ENCODE measurements at regions of chr1 and their contacts with region 1.

Region 1: DNA sequence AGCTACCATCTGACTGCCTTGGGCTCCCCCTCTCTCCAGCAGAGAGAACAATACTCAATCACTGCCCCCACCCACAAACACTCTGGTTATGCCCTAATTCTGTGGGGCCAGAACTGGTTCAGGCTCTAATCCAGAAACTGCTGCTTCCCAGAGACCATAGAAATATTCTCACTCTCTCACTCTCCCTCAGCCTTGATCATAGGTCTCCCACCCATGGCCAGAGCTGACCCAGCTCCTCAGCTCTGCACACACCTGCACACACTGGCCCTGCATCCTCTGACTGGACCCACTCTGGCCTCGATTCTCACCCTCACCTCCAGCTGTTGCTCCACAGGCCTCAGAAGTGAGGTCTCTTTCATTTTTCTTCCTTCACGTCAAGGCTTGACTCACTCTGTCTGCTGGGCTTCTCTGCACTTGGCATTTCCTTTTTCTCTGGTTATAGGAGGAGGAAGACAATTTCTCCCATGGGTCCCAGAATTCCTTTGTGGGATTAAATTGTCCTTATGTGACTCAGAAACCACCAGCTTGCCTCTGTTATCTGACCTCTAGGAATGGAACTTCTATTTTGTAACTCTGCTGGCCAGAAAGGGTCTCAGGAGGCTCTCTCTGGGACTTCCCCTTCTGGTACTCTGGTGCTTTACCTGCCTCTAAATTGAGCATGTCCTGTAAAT is 15.6 kb upstream of the ZMYM6 start:
- DNase-seq: peak; percentile 64
- ATAC-seq: peak; percentile 46
- H3K4me3 ChIP-seq: no peak overlapping the region
- H3K27ac ChIP-seq: no peak overlapping the region; the same call in 1 of the 2 replicates
- H3K4me1 ChIP-seq: peaks cover 8% of the 10 kb centered on the region; the same call in 1 of the 2 replicates
- H3K27me3 ChIP-seq: no peaks in the 10 kb centered on the region
- CTCF ChIP-seq: no peak

Region 2: DNA sequence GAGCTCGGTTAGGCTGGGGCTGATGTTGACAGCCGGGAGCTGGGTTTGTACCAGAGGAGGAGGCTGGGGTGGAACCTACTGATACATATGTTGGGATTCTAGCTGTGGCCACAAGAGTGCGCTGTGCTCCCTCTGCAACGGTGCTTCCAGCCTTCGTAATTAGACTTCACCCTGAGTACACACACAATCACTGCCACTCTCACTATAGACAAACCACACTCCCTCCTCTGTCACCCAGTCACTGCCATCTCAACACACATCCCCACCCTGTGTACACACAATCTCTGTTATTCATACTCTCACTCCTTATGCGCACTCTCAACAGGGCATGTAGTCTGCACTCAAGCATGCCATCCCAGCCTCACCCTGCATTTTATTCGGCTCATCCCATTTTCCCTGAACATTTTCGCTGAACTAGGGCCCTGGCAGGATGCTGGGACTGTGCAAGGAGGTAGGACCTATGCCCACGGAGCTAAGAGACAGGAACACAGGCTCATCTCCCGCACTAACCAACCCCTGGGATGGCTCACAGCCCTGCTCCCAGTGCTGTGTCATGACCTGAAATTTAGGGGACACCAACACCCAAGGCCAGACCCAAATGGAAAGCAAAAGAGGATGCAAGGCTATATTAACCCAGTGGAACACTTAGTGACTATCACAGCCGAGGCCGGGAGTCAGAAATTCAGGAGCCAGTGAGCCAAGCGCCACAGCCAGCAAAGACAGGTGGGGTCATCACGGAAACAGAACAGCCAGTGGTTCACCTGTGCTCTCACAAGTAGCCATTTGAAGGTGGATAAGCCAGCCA is 260.6 kb before region 1 on chr1:
- CTCF ChIA-PET with region 1: no interaction called
- POLR2A ChIA-PET with region 1: no interaction called
- intact Hi-C with region 1: no loop called
- DNase-seq: peak; percentile 87
- ATAC-seq: peak; percentile 76
- H3K4me3 ChIP-seq: no peak overlapping the region
- H3K27ac ChIP-seq: peak overlapping the region; percentile 80
- H3K4me1 ChIP-seq: peaks cover 53% of the 10 kb centered on the region
- H3K27me3 ChIP-seq: no peaks in the 10 kb centered on the region
- CTCF ChIP-seq: peak; percentile 85

Region 3: GRCh38 chr1:34911465-34911864 is 135.9 kb before region 1 on chr1:
- CTCF ChIA-PET with region 1: no interaction called
- POLR2A ChIA-PET with region 1: interaction called, 13 read pairs
- intact Hi-C with region 1: no loop called
- DNase-seq: no peak
- ATAC-seq: no peak
- H3K4me3 ChIP-seq: no peak overlapping the region
- H3K27ac ChIP-seq: no peak overlapping the region
- H3K4me1 ChIP-seq: no peaks in the 10 kb centered on the region
- H3K27me3 ChIP-seq: peaks cover 38% of the 10 kb centered on the region
- CTCF ChIP-seq: no peak

Region 4: GRCh38 chr1:35016406-35016805 is 30.9 kb before region 1 on chr1:
- CTCF ChIA-PET with region 1: no interaction called
- POLR2A ChIA-PET with region 1: no interaction called
- intact Hi-C with region 1: no loop called
- DNase-seq: no peak
- ATAC-seq: no peak
- H3K4me3 ChIP-seq: no peak overlapping the region
- H3K27ac ChIP-seq: no peak overlapping the region
- H3K4me1 ChIP-seq: no peaks in the 10 kb centered on the region
- H3K27me3 ChIP-seq: no peaks in the 10 kb centered on the region
- CTCF ChIP-seq: no peak